IMR-90 (cell line): ENCODE measurements at regions of chr20 and their contacts with region 1.

Region 1: GRCh38 chr20:38985603-38986170 is 23.5 kb downstream of the DHX35 start:
- DNase-seq: peak; percentile 73
- ATAC-seq: peak; percentile 48; the same call in 1 of the 2 replicates
- H3K4me3 ChIP-seq: no peak overlapping the region
- H3K27ac ChIP-seq: no peak overlapping the region
- H3K4me1 ChIP-seq: peaks cover 7% of the 10 kb centered on the region; the same call in 1 of the 2 replicates
- H3K27me3 ChIP-seq: no peaks in the 10 kb centered on the region
- CTCF ChIP-seq: no peak
- POLR2A ChIP-seq: no peak
- RAD21 ChIP-seq: no peak

Region 2: GRCh38 chr20:38504368-38505090 is 481.2 kb before region 1 on chr20:
- CTCF ChIA-PET with region 1: no interaction called
- POLR2A ChIA-PET with region 1: no interaction called
- dilution Hi-C with region 1: no loop called
- in situ Hi-C with region 1: no loop called
- intact Hi-C with region 1: no loop called
- DNase-seq: no peak
- ATAC-seq: no peak
- H3K4me3 ChIP-seq: no peak overlapping the region
- H3K27ac ChIP-seq: no peak overlapping the region
- H3K4me1 ChIP-seq: no peaks in the 10 kb centered on the region
- H3K27me3 ChIP-seq: no peaks in the 10 kb centered on the region
- CTCF ChIP-seq: no peak
- POLR2A ChIP-seq: no peak
- RAD21 ChIP-seq: no peak

Region 3: DNA sequence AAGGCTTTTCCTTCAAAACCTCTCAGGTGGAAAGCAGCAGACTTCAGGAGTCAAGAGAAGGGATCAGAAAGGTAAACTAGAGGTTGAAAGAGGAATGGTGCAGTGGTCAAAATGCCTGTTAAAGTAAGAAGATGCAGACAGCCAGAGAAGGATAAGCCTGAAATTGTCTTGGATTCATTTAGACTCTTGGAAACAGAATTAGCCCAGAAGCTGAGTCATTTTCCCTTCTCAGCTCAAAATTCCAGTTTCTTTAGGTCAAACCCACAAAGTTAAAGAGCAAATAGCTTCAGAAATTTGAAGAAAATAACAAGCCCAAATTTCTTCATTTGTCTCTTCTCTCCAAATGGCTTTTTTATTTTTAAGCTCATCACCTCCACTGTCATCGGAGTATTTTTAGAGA is 50.3 kb after region 1 on chr20:
- CTCF ChIA-PET with region 1: interaction called, 5 read pairs
- POLR2A ChIA-PET with region 1: no interaction called
- dilution Hi-C with region 1: no loop called
- in situ Hi-C with region 1: no loop called
- intact Hi-C with region 1: loop called (anchors 10 kb)
- DNase-seq: peak; percentile 77
- ATAC-seq: peak; percentile 62
- H3K4me3 ChIP-seq: no peak overlapping the region
- H3K27ac ChIP-seq: peak overlapping the region; percentile 99
- H3K4me1 ChIP-seq: peaks cover 18% of the 10 kb centered on the region
- H3K27me3 ChIP-seq: no peaks in the 10 kb centered on the region
- CTCF ChIP-seq: no peak
- POLR2A ChIP-seq: no peak
- RAD21 ChIP-seq: no peak